ENCODE measurements at regions of chr15 and their contacts with region 1.

Region 1: DNA sequence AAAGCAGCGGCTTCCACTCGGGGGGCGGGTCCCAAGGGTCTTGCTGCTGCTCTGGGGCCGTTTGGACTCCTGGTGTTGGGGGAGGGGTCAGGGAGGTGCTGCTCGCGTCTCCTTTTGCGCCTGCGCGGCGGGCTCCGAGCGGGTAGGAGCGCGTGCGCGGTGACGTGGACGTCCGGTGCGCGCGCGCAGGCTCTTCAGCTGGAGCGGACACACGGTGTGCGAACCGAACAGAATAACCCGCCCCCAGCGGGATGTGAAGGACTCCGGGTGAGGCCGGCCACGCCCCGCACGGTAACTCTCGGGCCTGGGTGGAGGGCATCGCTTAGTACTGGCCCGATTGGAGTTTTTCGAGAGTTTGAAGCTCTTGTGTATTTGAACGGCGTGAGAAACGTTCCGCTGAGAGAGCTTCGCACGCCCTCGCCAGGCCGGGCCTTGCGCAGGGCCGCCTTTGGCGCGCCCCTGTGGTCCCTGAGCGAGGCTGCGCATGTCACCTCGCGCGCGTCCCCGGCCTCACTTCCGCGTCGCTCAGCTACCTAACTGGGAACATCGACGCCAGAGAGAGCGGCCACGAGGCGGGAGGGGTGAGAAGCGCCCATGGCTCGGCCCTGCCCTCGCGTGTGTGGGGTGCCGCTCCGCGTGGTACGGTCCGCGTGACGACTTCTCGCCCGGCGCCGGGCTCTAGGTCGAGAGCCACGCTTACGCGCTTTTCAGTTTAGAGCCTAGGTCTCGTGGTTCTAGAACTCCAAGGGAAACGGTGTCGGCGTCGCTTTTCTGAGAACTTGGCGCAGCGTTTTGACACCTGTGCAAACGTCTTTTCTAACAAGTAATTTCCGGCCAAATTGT is at the start of gene MGA:
- DNase-seq: peak; percentile 94
- ATAC-seq: peak; percentile 89
- H3K4me3 Mint-ChIP-seq: peak within 1 kb of the TSS; percentile 92
- H3K27ac Mint-ChIP-seq: peak within 1 kb of the TSS; percentile 95
- H3K4me1 Mint-ChIP-seq: peaks cover 42% of the 10 kb centered on the region
- H3K27me3 Mint-ChIP-seq: peaks cover 7% of the 10 kb centered on the region
- total RNA-seq, gene MGA: 33.7 to 39.3 TPM

Region 2: DNA sequence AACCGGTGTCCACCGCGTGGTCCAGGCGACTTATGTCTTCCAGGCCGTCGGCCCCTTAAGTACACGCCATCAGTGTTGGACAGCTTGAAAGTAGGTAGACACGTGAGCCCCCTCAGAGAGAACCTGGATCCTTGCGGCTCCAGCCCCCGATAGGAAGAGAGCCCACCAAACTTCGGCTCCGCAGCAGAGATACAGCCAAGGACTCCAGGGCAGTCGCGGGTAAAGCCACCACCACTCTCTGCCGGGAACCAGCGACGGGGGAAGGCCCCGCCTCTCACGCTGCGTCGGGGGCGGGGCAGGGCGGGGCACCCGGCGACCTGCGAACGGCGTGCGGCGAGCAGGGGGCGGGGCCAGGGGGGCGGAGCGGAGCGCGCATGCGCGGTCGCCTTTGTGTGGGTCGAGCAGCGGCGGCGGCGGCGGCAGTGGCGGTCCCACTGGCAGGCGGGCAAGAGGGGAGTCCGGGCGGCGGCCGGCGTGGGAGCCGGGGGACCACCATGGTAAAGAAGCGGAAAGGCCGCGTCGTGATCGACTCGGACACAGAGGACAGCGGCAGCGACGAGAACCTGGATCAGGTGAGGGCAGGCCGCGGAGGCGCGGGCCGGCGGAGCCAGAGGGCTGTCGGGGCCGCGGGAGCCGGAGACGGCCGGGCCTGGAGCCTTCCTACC is 243.6 kb before region 1 on chr15 and contains the start of gene RTF1:
- CTCF ChIA-PET with region 1: no interaction called
- POLR2A ChIA-PET with region 1: no interaction called
- intact Hi-C with region 1: loop called in 1 of 2 experiments (anchors 2 kb)
- DNase-seq: peak; percentile 98
- ATAC-seq: peak; percentile 94
- H3K4me3 Mint-ChIP-seq: peak within 1 kb of the TSS; percentile 88
- H3K27ac Mint-ChIP-seq: peak within 1 kb of the TSS; percentile 92
- H3K4me1 Mint-ChIP-seq: peaks cover 38% of the 10 kb centered on the region
- H3K27me3 Mint-ChIP-seq: no peaks in the 10 kb centered on the region
- total RNA-seq, gene RTF1: 29.4 to 32.3 TPM

Region 3: GRCh38 chr15:41544650-41545015 is 115.8 kb before region 1 on chr15:
- CTCF ChIA-PET with region 1: no interaction called
- POLR2A ChIA-PET with region 1: no interaction called
- intact Hi-C with region 1: loop called in 1 of 2 experiments (anchors 1 kb)
- DNase-seq: peak; percentile 21
- ATAC-seq: no peak
- H3K4me3 Mint-ChIP-seq: peak overlapping the region; percentile 95
- H3K27ac Mint-ChIP-seq: peak overlapping the region; percentile 91
- H3K4me1 Mint-ChIP-seq: peaks cover 12% of the 10 kb centered on the region
- H3K27me3 Mint-ChIP-seq: no peaks in the 10 kb centered on the region

Region 4: DNA sequence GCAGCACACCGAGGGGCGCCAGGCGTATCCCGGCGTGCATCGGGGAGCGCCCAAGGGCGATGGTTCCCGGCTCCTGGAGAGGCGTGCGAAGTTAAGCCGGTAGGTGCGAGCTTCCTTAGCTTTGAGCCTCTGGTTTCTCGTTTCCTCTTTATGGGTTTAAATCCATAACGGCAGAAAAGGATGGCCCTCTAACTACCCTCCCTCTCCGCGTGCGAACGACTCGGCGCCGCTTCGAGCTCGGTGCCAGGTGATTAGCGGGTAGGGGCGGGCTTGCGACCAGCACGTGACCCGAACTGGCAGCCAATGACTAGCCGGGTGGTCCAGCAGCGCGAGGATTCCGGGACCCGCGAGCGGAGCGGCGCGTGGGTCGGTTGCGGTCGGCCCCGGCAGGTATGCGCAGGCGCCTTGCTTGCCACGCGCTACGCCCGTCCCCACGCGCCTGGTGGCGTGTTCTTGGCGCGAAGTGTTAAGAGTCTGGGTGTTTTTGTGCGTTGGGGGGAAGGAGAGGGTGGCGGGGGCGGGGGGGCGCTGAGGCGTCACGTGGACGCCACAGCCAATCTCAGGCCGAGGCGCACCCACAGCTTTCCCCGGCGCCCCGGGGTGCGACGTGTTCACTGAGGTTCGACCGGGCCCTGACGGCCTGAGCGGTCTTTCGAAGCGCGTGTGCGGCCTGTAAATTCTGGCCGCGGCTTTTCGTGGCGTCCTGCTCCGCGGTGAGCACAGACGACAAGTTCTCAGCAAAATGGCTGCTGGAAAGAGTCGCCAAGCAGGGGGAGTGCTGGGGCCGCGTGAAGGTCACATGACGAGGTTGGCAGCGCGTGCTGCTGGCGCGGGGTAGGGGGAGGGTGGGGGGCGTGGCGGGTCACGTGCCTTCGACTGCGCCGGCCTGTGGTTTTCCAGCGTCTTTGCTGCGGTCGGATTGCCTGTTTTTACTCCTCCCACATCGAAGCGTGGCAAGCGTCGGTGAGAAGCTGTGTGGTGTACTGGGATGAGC is 39.0 kb before region 1 on chr15:
- CTCF ChIA-PET with region 1: interaction called, 3 read pairs
- POLR2A ChIA-PET with region 1: no interaction called
- intact Hi-C with region 1: loop called (anchors 1 kb)
- DNase-seq: peak; percentile 91
- ATAC-seq: peak; percentile 90
- H3K4me3 Mint-ChIP-seq: peak overlapping the region; percentile 70
- H3K27ac Mint-ChIP-seq: peak overlapping the region; percentile 76
- H3K4me1 Mint-ChIP-seq: peaks cover 11% of the 10 kb centered on the region
- H3K27me3 Mint-ChIP-seq: no peaks in the 10 kb centered on the region

Region 5: DNA sequence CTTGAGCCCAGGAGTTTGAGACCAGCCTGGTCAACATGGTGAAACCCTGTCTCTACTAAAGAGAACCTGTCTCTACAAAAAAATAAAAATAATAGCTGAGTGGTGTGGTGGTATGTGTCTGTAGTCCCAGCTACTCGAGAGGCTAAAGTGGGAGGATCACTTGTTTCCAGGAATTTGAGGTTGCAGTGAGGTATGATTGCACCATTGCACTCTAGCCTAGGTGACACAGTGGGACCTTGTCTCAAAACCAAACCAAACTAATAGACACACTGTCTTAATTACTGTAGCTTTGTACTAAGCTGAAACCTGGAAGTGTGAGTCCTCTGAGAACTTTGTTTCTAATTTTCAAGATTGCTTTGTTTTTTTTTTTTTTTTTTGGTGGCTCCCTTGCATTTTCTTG is 30.2 kb after region 1 on chr15:
- CTCF ChIA-PET with region 1: interaction called, 7 read pairs
- POLR2A ChIA-PET with region 1: no interaction called
- intact Hi-C with region 1: loop called in 1 of 2 experiments (anchors 1 kb)
- DNase-seq: peak; percentile 41
- ATAC-seq: peak; percentile 83
- H3K4me3 Mint-ChIP-seq: no peak overlapping the region
- H3K27ac Mint-ChIP-seq: peak overlapping the region; percentile 85
- H3K4me1 Mint-ChIP-seq: peaks cover 63% of the 10 kb centered on the region
- H3K27me3 Mint-ChIP-seq: no peaks in the 10 kb centered on the region

Measured in activated CD4-positive, alpha-beta T cell treated with anti-CD3 and anti-CD28 coated beads for 36 hours (primary cell).